ENCODE measurements at regions of chr16 and their contacts with region 1.

Region 1: GRCh38 chr16:14285513-14286385 is 214.6 kb downstream of the MRTFB start:
- DNase-seq: peak; percentile 92 to 94
- ATAC-seq: peak; percentile 94 to 96 (median 95)
- H3K4me3 ChIP-seq: peak overlapping the region; percentile 67 to 95 (median 86)
- H3K27ac ChIP-seq: peak overlapping the region; percentile 17 to 89 (median 82)
- H3K4me1 ChIP-seq: peaks cover 0 to 21% (median 15%) of the 10 kb centered on the region in 9 donors
- H3K27me3 ChIP-seq: no peaks in the 10 kb centered on the region
- CTCF ChIP-seq: peak in 1 of 9 donors; percentile 1

Region 2: GRCh38 chr16:14013571-14014282 is 272.0 kb before region 1 on chr16:
- intact Hi-C with region 1: loop called in 1 of 10 experiments (anchors 10 kb)
- DNase-seq: peak in 1 of 2 donors; percentile 50
- ATAC-seq: peak; percentile 44 to 83 (median 72)
- H3K4me3 ChIP-seq: peak overlapping the region in 2 of 10 donors; percentile 6 to 20
- H3K27ac ChIP-seq: peak overlapping the region in 9 of 10 donors; percentile 27 to 82 (median 65)
- H3K4me1 ChIP-seq: peaks cover 9 to 64% (median 51%) of the 10 kb centered on the region in 9 donors
- H3K27me3 ChIP-seq: no peaks in the 10 kb centered on the region
- CTCF ChIP-seq: no peak

Region 3: DNA sequence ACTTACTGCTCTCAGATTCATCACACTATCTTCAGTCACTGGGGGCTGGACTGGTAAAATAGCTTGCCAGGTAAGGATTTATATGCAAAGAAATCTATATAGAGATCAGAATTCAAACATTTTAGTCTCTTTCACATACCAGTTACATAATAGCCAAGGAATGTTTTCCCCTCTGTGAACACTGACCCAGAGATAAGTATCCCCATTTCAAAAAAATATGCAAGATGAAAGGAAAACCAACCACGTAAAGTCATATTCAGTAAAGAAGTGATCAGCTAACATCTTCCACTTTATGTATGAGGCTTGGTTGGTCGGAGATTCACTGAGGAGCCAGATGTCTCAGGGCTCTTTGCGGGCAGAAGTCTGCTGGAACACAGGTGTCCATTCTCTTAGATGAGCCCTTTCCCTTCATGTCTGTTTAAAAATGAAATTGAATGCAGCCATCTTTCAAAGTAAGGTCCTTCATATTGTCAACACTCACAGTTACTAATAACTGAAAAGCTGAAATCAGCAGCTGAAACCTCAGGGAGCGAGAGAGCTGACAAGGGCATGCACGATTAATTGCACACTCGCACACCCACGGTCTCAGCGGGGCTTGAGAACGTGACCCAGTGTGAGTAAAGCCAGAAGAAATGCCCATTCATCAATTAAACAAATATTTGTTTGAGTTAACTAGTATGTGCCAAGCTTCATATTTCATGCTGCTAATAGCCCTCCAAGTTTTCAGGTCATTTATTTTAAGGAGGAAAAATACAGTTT is 53.5 kb before region 1 on chr16:
- intact Hi-C with region 1: no loop called
- DNase-seq: no peak
- ATAC-seq: no peak
- H3K4me3 ChIP-seq: no peak overlapping the region
- H3K27ac ChIP-seq: no peak overlapping the region
- H3K4me1 ChIP-seq: no peaks in the 10 kb centered on the region
- H3K27me3 ChIP-seq: no peaks in the 10 kb centered on the region
- CTCF ChIP-seq: no peak

Region 4: GRCh38 chr16:14242769-14243168 is 43.0 kb before region 1 on chr16:
- intact Hi-C with region 1: no loop called
- DNase-seq: no peak
- ATAC-seq: no peak
- H3K4me3 ChIP-seq: no peak overlapping the region
- H3K27ac ChIP-seq: peak overlapping the region in 1 of 10 donors; percentile 12
- H3K4me1 ChIP-seq: peaks cover 0 to 30% (median 24%) of the 10 kb centered on the region in 9 donors
- H3K27me3 ChIP-seq: no peaks in the 10 kb centered on the region
- CTCF ChIP-seq: no peak

Region 5: DNA sequence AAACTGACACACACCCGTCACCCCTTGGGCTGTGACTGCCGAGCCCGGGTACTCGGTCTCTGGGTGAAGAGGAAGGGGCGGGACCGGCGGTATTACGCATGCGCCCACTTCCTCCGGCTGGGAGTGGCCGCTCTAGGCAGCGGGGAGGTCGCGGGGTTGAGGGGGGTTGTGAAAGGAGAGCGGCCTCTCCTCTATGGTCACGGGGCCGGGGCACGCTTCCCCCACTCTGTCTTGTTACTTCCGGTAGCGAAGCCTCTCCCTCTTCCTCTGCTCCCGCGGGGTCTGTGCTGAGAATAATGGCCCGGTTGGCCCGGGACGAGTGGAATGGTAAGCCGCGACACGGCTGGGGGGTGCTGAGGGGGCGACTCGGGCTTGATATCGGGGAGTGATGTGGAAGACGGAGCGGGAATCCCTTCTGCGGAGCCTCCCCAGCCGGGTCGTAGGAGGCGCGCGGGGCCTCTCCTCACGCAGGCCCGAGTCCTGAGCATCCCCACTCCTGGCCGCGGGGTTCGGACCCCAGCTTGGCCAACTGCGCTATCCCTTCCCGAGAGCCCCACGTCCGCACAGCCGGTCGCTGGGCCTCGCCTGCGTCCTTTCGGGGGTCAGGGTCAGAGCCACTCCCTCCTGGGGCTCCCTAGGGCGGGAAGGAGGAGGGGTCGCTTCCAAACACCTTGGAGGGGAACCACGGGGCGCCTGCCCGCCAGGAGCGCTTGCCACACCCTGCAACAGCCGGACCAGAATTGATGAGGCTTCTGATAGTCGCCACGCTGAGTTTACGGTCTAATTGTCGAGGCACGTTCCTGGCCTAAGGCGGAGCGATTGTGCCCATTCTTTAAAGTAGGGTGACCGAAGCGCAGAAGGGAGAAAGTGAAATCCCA is 347.2 kb after region 1 on chr16 and contains the start of gene BFAR:
- intact Hi-C with region 1: loop called in 1 of 10 experiments (anchors 10 kb)
- DNase-seq: peak; percentile 99
- ATAC-seq: peak; percentile 94 to 96 (median 95)
- H3K4me3 ChIP-seq: peak within 1 kb of the TSS; percentile 59 to 99 (median 97)
- H3K27ac ChIP-seq: peak within 1 kb of the TSS; percentile 48 to 98 (median 95)
- H3K4me1 ChIP-seq: peaks cover 0 to 77% (median 54%) of the 10 kb centered on the region in 9 donors
- H3K27me3 ChIP-seq: no peaks in the 10 kb centered on the region
- CTCF ChIP-seq: no peak
- total RNA-seq, gene BFAR: 33.2 to 42.5 (median 36.5) TPM

Measured in heart right ventricle (tissue), 16 donors.